Posterior vena cava (tissue), 2 donors: ENCODE measurements at regions of chr20 and their contacts with region 1.

Region 1: GRCh38 chr20:46174469-46175128 is 56.5 kb downstream of the CD40 start:
- DNase-seq: peak; percentile 90

Region 2: GRCh38 chr20:46013826-46014516 is 160.6 kb before region 1 on chr20:
- intact Hi-C with region 1: loop called in 1 of 2 experiments (anchors 10 kb)
- DNase-seq: no peak

Region 3: DNA sequence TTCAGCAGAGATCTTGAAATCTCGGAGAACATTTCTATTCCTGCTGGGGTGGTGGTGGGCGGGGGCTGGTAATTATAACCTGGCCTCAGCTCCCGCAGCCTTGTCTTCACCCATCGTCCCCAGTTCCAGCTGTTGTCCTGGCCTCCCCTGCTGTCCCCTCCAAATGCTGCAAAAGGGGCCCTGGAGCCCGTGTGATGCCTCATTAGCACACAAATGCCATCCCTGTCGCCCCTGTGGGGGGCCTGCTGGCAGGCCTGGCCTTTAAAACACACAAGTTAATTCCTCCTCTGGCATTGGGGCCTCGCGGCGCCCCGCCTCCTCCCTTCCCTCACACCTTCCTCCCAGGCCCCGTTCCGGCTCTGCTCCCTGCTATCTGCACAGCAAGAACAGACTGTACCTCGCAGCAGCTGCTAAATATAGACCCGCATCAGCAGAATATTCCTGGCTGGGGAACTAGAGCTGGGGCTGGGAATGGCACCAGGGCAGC is 48.0 kb after region 1 on chr20:
- intact Hi-C with region 1: loop called in 1 of 2 experiments (anchors 1 kb)
- DNase-seq: no peak

Region 4: GRCh38 chr20:46978951-46979491 is 804.4 kb after region 1 on chr20:
- intact Hi-C with region 1: no loop called
- DNase-seq: no peak